ENCODE measurements at regions of chr3 and their contacts with region 1.

Region 1: DNA sequence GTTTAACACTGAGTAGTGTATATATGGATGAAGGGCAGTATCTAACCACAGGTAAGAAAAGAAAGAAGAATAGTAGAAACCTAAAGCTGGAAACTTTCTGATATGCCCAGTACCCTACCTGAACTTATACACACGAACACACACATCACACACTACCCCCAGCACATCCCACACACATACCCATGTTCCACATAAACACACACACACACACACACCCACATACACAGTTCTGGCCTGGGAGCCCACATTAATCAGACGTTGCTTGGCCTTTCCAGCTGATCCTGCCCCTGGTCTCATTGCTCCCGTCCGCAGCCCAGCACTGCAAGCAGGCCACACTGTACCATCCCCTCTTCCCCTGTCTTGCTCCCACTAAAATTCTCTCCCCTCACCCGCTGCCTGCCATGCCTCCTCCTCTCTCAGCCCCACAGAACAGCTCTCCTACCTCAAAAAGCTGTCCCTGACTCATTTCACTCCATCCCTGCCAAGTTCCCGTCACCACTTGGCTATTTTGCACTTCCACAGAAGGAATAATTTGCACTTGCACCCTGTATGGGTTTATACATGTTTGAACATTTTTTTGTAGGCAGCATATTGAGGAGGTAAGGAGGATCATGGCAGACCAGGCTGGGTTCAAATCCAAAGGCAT is 185.8 kb upstream of the PPP2R3A start:
- DNase-seq: no peak
- ATAC-seq: no peak
- H3K4me3 ChIP-seq: no peak overlapping the region
- H3K27ac ChIP-seq: no peak overlapping the region
- H3K4me1 ChIP-seq: no peaks in the 10 kb centered on the region
- H3K27me3 ChIP-seq: peaks cover 28% of the 10 kb centered on the region
- CTCF ChIP-seq: no peak
- POLR2A ChIP-seq: no peak
- RAD21 ChIP-seq: no peak

Region 2: DNA sequence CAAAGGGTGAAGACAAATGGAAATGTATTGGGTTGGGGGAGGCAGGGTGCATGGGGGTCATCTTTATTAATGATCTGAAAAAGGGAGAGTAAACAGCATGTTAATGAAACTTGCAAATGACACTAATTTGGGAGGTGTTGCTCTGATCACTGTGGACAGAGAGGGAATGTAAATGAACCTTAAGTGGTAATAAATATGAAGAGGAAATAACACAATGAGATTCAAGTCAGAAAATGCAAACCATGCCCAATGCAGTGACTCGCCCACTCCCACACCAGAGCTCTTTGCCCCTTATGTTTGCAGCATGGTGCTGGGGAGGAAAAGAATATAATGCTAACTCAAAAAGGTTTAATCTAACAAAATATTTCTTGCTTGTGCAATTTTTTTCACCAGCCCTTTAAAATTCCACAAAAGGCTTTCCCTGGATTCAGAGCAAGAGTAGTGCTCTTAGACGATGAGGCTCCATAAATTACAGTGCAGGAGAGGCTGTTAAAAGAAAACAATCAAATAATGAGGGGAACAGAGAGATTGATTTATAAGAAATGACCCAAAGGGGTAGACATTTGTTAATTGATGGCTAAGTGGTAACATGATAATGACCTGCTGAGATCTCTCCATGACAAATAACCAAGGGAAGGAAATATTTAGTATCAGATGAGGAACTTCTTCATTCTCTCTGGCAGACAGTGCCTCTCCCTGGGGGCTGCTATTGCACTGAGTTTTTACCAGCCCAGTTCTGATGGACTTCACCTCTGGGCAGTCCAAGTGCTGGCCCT is 24.2 kb before region 1 on chr3:
- CTCF ChIA-PET with region 1: no interaction called
- POLR2A ChIA-PET with region 1: no interaction called
- RAD21 ChIA-PET with region 1: no interaction called
- intact Hi-C with region 1: loop called (anchors 1 kb)
- DNase-seq: no peak
- ATAC-seq: no peak
- H3K4me3 ChIP-seq: no peak overlapping the region
- H3K27ac ChIP-seq: no peak overlapping the region
- H3K4me1 ChIP-seq: no peaks in the 10 kb centered on the region
- H3K27me3 ChIP-seq: peaks cover 31% of the 10 kb centered on the region
- CTCF ChIP-seq: no peak
- POLR2A ChIP-seq: no peak
- RAD21 ChIP-seq: no peak